Naive thymus-derived CD4-positive, alpha-beta T cell (primary cell): ENCODE measurements at regions of chr15 and their contacts with region 1.

Region 1: DNA sequence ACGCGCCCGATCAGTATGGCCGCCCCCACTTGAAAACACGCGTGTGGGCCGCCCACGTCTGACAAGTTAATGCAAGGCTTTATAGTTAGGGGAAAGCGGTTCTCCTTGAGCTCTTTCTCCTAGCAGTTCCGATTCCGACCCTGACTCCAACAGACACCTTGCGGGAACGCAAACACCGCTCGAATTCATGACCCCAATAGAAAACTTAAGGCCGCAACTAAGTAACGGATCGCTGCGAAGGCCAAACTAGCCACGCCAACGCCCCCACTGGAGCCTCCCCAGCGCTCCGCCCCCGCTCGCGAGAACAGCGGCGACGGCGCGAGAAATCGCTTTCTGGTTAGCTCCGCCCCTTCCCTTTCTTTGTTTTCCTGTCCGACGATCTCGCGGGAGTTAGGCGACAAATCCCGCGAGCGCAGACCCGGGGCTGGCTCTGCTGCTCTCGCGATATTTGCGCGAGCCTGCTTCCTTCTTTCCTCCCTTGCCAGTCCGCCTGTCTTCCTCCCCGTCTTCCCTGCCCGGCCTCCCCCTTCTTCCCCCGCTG is at the start of gene IREB2:
- DNase-seq: peak; percentile 94 to 99 (median 98)
- ATAC-seq: peak; percentile 96
- H3K4me3 ChIP-seq: peak within 1 kb of the TSS; percentile 69
- H3K4me3 Mint-ChIP-seq: peak within 1 kb of the TSS; percentile 89 to 100 (median 97)
- H3K27ac ChIP-seq: peak within 1 kb of the TSS; percentile 94
- H3K27ac Mint-ChIP-seq: peak within 1 kb of the TSS; percentile 96 to 100 (median 99)
- H3K4me1 ChIP-seq: peaks cover 32 to 36% of the 10 kb centered on the region in 2 donors
- H3K4me1 Mint-ChIP-seq: peaks cover 29 to 56% (median 51%) of the 10 kb centered on the region in 7 donors
- H3K27me3 ChIP-seq: no peaks in the 10 kb centered on the region
- H3K27me3 Mint-ChIP-seq: peaks cover 0 to 2% (median 0%) of the 10 kb centered on the region in 5 donors
- total RNA-seq, gene IREB2: 64.1 to 79.8 (median 69.5) TPM

Region 2: GRCh38 chr15:78149068-78149804 is 288.6 kb before region 1 on chr15 and contains the start of gene IDH3A:
- CTCF ChIA-PET with region 1: no interaction called
- POLR2A ChIA-PET with region 1: no interaction called
- intact Hi-C with region 1: loop called (anchors 1 to 5 kb)
- DNase-seq: peak; percentile 97 to 100 (median 99)
- ATAC-seq: peak; percentile 99
- H3K4me3 ChIP-seq: peak within 1 kb of the TSS; percentile 76
- H3K4me3 Mint-ChIP-seq: peak within 1 kb of the TSS; percentile 93 to 98 (median 96)
- H3K27ac ChIP-seq: peak within 1 kb of the TSS; percentile 77
- H3K27ac Mint-ChIP-seq: peak within 1 kb of the TSS; percentile 91 to 97 (median 95)
- H3K4me1 ChIP-seq: peaks cover 17 to 24% of the 10 kb centered on the region in 2 donors
- H3K4me1 Mint-ChIP-seq: peaks cover 25 to 51% (median 43%) of the 10 kb centered on the region in 7 donors
- H3K27me3 ChIP-seq: no peaks in the 10 kb centered on the region
- H3K27me3 Mint-ChIP-seq: no peaks in the 10 kb centered on the region
- total RNA-seq, gene IDH3A: 44.4 to 105 (median 61.1) TPM

Region 3: GRCh38 chr15:78299101-78299930 is 138.5 kb before region 1 on chr15 and contains the start of gene SKIC8:
- CTCF ChIA-PET with region 1: no interaction called
- POLR2A ChIA-PET with region 1: interaction called, 44 read pairs
- intact Hi-C with region 1: loop called (anchors 1 kb)
- DNase-seq: peak; percentile 84 to 92 (median 91)
- ATAC-seq: peak; percentile 99
- H3K4me3 ChIP-seq: peak within 1 kb of the TSS; percentile 88
- H3K4me3 Mint-ChIP-seq: peak within 1 kb of the TSS; percentile 94 to 99 (median 97)
- H3K27ac ChIP-seq: peak within 1 kb of the TSS; percentile 80
- H3K27ac Mint-ChIP-seq: peak within 1 kb of the TSS; percentile 89 to 97 (median 94)
- H3K4me1 ChIP-seq: peaks cover 8 to 15% of the 10 kb centered on the region in 2 donors
- H3K4me1 Mint-ChIP-seq: peaks cover 12 to 41% (median 31%) of the 10 kb centered on the region in 7 donors
- H3K27me3 ChIP-seq: no peaks in the 10 kb centered on the region
- H3K27me3 Mint-ChIP-seq: no peaks in the 10 kb centered on the region
- total RNA-seq, gene SKIC8: 26.7 to 48.7 (median 43.6) TPM

Region 4: DNA sequence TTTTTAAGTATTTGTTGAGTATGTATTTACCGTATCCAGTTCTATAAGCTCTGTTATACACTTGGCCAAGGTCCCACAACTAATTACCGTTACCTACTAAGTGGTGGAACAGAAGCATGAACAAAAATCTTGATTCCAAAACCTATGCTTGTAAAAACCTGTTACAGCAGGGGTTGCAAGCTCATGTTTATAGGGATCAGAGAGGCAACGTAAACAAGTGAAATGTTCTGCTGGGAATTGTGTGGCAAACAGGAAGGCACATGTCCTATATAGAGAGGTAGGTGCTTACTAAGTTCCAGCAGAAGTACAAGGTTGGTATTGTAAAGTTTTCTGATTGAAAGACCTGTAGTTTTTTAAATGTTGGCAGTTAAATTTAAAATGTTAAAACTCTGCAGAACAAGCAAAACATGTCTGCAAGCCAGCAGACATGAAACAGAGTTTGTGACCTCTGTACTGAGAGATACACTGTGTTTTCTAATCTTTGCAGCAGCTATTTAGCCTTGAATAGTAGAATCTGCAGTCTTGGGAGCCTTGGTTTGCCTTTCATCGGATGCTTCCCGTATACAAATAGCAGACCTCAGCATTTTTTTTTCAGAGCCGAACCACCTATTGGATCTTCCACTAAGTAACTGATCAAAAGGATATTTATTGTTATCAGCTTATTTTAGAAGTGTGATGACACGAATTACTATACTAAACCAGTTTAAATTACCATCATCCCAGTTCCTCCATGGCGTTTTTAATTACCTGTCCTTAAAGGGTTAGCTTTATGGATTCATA is 11.6 kb after region 1 on chr15:
- CTCF ChIA-PET with region 1: no interaction called
- POLR2A ChIA-PET with region 1: interaction called, 14 read pairs
- intact Hi-C with region 1: no loop called
- DNase-seq: no peak
- ATAC-seq: no peak
- H3K4me3 ChIP-seq: no peak overlapping the region
- H3K4me3 Mint-ChIP-seq: no peak overlapping the region
- H3K27ac ChIP-seq: no peak overlapping the region
- H3K27ac Mint-ChIP-seq: peak overlapping the region in 1 of 9 donors; percentile 11
- H3K4me1 ChIP-seq: peaks cover 19 to 25% of the 10 kb centered on the region in 2 donors
- H3K4me1 Mint-ChIP-seq: peaks cover 48 to 84% (median 78%) of the 10 kb centered on the region in 7 donors
- H3K27me3 ChIP-seq: no peaks in the 10 kb centered on the region
- H3K27me3 Mint-ChIP-seq: no peaks in the 10 kb centered on the region

Region 5: GRCh38 chr15:78506971-78507830 is 69.4 kb after region 1 on chr15 and contains the start of gene HYKK:
- CTCF ChIA-PET with region 1: no interaction called
- POLR2A ChIA-PET with region 1: interaction called, 8 read pairs
- intact Hi-C with region 1: loop called in 1 of 2 experiments (anchors 1 kb)
- DNase-seq: peak; percentile 31 to 80 (median 71)
- ATAC-seq: peak; percentile 90
- H3K4me3 ChIP-seq: peak within 1 kb of the TSS; percentile 70
- H3K4me3 Mint-ChIP-seq: peak within 1 kb of the TSS; percentile 84 to 99 (median 93)
- H3K27ac ChIP-seq: peak within 1 kb of the TSS; percentile 53
- H3K27ac Mint-ChIP-seq: peak within 1 kb of the TSS; percentile 56 to 90 (median 85)
- H3K4me1 ChIP-seq: peaks cover 0 to 12% of the 10 kb centered on the region in 2 donors
- H3K4me1 Mint-ChIP-seq: peaks cover 9 to 44% (median 31%) of the 10 kb centered on the region in 7 donors
- H3K27me3 ChIP-seq: no peaks in the 10 kb centered on the region
- H3K27me3 Mint-ChIP-seq: peaks cover 0 to 16% (median 0%) of the 10 kb centered on the region in 5 donors
- total RNA-seq, gene HYKK: 1.4 to 7.3 (median 3.1) TPM

Region 6: GRCh38 chr15:78761891-78762385 is 324.1 kb after region 1 on chr15:
- CTCF ChIA-PET with region 1: no interaction called
- POLR2A ChIA-PET with region 1: no interaction called
- intact Hi-C with region 1: loop called in 1 of 2 experiments (anchors 5 kb)
- DNase-seq: no peak
- ATAC-seq: no peak
- H3K4me3 ChIP-seq: peak overlapping the region; percentile 73
- H3K4me3 Mint-ChIP-seq: peak overlapping the region; percentile 44 to 76 (median 72)
- H3K27ac ChIP-seq: peak overlapping the region; percentile 67
- H3K27ac Mint-ChIP-seq: peak overlapping the region; percentile 84 to 93 (median 90)
- H3K4me1 ChIP-seq: peaks cover 15 to 22% of the 10 kb centered on the region in 2 donors
- H3K4me1 Mint-ChIP-seq: peaks cover 9 to 35% (median 27%) of the 10 kb centered on the region in 7 donors
- H3K27me3 ChIP-seq: no peaks in the 10 kb centered on the region
- H3K27me3 Mint-ChIP-seq: no peaks in the 10 kb centered on the region

Region 7: GRCh38 chr15:79923515-79924395 is 1485.9 kb after region 1 on chr15:
- CTCF ChIA-PET with region 1: no interaction called
- POLR2A ChIA-PET with region 1: no interaction called
- intact Hi-C with region 1: loop called in 1 of 2 experiments (anchors 5 kb)
- DNase-seq: peak; percentile 95 to 100 (median 99)
- ATAC-seq: peak; percentile 98
- H3K4me3 ChIP-seq: peak overlapping the region; percentile 98
- H3K4me3 Mint-ChIP-seq: peak overlapping the region; percentile 90 to 98 (median 94)
- H3K27ac ChIP-seq: peak overlapping the region; percentile 96
- H3K27ac Mint-ChIP-seq: peak overlapping the region; percentile 95 to 98 (median 97)
- H3K4me1 ChIP-seq: peaks cover 11 to 14% of the 10 kb centered on the region in 2 donors
- H3K4me1 Mint-ChIP-seq: peaks cover 9 to 30% (median 24%) of the 10 kb centered on the region in 7 donors
- H3K27me3 ChIP-seq: no peaks in the 10 kb centered on the region
- H3K27me3 Mint-ChIP-seq: no peaks in the 10 kb centered on the region